Natural killer cell (primary cell): ENCODE measurements at regions of chr2 and their contacts with region 1.

Region 1: GRCh38 chr2:25606892-25607291 is 66.5 kb downstream of the DTNB start:
- DNase-seq: peak in 1 of 2 donors; percentile 61
- ATAC-seq: peak in 2 of 3 donors; percentile 36 to 45
- H3K4me3 ChIP-seq: no peak overlapping the region
- H3K4me3 Mint-ChIP-seq: no peak overlapping the region
- H3K27ac ChIP-seq: no peak overlapping the region
- H3K27ac Mint-ChIP-seq: no peak overlapping the region
- H3K4me1 ChIP-seq: no peaks in the 10 kb centered on the region
- H3K4me1 Mint-ChIP-seq: no peaks in the 10 kb centered on the region
- H3K27me3 ChIP-seq: no peaks in the 10 kb centered on the region
- H3K27me3 Mint-ChIP-seq: no peaks in the 10 kb centered on the region
- CTCF ChIP-seq: peak; percentile 45

Region 2: DNA sequence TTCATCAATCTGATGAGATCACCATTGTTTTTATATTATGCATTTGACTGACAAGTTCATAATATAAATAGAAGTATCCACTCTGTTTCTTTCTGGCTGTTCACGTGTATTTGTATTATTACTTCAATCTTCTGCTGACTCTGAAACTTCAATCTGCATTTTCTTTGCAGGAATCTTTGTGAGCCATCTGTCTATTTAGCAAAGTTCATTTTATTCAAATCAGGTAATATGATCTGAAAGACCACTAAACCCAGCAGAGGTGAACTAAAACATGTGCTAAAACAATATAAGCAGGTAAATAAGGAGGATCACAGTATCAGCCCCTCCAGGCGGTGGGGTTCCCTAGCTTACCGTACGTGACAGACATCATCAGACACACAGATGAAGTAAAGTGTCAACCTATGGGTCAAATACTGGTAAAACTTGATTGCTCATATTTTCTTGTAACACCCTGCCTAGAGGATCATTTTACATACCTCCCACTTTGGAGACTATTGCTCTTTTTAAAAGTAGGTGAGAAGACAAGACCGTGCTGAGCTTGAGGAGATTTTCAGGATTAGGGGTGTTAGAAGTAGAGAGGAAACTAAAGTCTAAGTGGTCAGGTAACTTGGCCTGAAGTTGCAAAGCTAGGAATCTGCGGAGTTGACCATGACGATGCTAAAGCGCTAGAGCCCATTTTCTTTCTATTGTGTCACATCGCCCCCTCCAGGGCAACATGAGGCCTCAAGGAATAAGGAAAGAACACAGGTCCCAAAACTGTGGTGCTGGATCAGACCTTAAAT is 57.5 kb after region 1 on chr2:
- intact Hi-C with region 1: loop called (anchors 1 kb)
- DNase-seq: peak in 1 of 2 donors; percentile 50
- ATAC-seq: peak; percentile 39 to 66 (median 66)
- H3K4me3 ChIP-seq: no peak overlapping the region
- H3K4me3 Mint-ChIP-seq: no peak overlapping the region
- H3K27ac ChIP-seq: no peak overlapping the region
- H3K27ac Mint-ChIP-seq: peak overlapping the region in 1 of 2 donors; percentile 25
- H3K4me1 ChIP-seq: no peaks in the 10 kb centered on the region
- H3K4me1 Mint-ChIP-seq: peaks cover 8 to 18% of the 10 kb centered on the region in 2 donors
- H3K27me3 ChIP-seq: no peaks in the 10 kb centered on the region
- H3K27me3 Mint-ChIP-seq: peaks cover 0 to 2% of the 10 kb centered on the region in 2 donors
- CTCF ChIP-seq: peak; percentile 37

Region 3: DNA sequence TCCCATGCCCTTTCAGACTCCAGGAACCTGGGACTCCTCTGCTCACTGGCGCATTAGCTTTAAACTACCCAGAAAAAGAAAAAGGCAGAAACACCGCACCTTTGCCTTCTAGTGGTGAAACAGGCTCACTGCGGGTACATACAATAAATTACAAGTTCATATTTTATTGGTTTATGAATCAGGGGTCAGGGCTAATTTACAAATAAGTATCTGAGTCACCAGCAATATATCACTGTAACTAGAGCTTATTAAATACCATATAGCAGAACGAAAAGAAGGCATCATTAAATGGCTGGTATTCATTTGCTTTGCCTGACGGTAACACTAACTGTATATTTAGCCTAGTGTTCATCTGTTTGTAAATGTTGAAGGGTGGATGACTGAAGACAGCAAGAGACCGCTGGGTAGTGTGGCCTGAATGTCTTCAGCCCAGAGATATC is 93.3 kb after region 1 on chr2:
- intact Hi-C with region 1: loop called (anchors 1 kb)
- DNase-seq: peak in 1 of 2 donors; percentile 61
- ATAC-seq: peak in 2 of 3 donors; percentile 53 to 58
- H3K4me3 ChIP-seq: no peak overlapping the region
- H3K4me3 Mint-ChIP-seq: no peak overlapping the region
- H3K27ac ChIP-seq: no peak overlapping the region
- H3K27ac Mint-ChIP-seq: no peak overlapping the region
- H3K4me1 ChIP-seq: no peaks in the 10 kb centered on the region
- H3K4me1 Mint-ChIP-seq: no peaks in the 10 kb centered on the region
- H3K27me3 ChIP-seq: no peaks in the 10 kb centered on the region
- H3K27me3 Mint-ChIP-seq: no peaks in the 10 kb centered on the region
- CTCF ChIP-seq: peak; percentile 53